Ovary (tissue), 10 donors: ENCODE measurements at regions of chr16 and their contacts with region 1.

Region 1: GRCh38 chr16:80309178-80309577 is 231.6 kb upstream of the DYNLRB2 start:
- DNase-seq: no peak
- H3K4me3 ChIP-seq: no peak overlapping the region
- H3K27ac ChIP-seq: no peak overlapping the region
- H3K4me1 ChIP-seq: no peaks in the 10 kb centered on the region
- H3K27me3 ChIP-seq: no peaks in the 10 kb centered on the region
- CTCF ChIP-seq: no peak
- EP300 ChIP-seq: no peak
- POLR2A ChIP-seq: no peak

Region 2: GRCh38 chr16:80375973-80376372 is 66.8 kb after region 1 on chr16:
- intact Hi-C with region 1: loop called in 1 of 4 experiments (anchors 2 kb)
- DNase-seq: no peak
- H3K4me3 ChIP-seq: no peak overlapping the region
- H3K27ac ChIP-seq: no peak overlapping the region
- H3K4me1 ChIP-seq: peaks cover 5% of the 10 kb centered on the region
- H3K27me3 ChIP-seq: no peaks in the 10 kb centered on the region
- CTCF ChIP-seq: no peak
- EP300 ChIP-seq: no peak
- POLR2A ChIP-seq: no peak